ENCODE measurements at regions of chr4 and their contacts with region 1.

Region 1: GRCh38 chr4:122309988-122310626 is 68.7 kb upstream of the ADAD1 start:
- DNase-seq: no peak
- ATAC-seq: no peak
- H3K4me3 Mint-ChIP-seq: no peak overlapping the region
- H3K27ac Mint-ChIP-seq: no peak overlapping the region
- H3K4me1 Mint-ChIP-seq: no peaks in the 10 kb centered on the region
- H3K27me3 Mint-ChIP-seq: no peaks in the 10 kb centered on the region
- CTCF ChIP-seq: no peak

Region 2: DNA sequence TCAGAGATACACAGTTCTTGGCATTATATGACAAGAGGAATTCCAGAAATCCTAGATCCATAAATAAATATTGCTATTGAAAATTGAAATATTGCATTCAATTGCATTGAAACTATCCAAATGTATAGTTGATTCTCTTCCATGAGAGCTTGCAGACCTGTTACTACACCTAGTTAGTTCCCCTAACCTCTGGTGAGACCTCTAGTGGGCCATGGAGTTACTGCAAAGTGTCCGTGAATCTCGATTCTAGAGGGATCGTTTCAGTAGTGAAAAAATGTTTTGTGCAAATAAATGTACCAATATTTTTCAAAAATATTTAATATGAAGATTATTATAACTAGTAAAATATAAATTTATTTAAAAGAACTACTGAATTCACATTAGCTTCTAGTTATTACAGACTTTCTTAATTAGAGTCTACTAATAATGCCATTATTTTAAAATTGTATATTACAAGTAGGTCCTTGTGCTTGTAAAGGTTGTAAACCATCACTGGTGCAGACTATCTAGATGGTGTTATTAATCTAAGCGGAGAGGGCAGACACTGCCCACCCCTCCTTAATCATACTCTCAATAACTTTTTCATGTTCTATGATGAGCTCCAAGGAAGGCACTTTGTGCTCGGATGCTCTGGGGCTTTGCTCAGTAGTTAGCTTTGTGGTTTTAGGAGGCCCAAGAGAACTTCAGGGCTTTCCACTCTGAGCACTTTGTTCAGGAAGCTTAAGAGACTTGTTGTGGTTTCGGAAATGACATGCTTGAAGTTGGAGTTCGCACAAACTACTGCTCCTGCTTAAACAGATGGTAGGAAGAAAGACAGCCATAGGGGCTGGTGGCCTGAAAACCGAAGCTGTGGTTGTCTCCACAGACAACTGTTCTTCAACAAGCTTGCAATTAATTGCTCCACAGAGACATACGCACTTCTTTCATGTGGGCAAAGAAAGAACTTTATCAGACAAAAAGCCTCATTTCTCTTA is 268.0 kb after region 1 on chr4:
- CTCF ChIA-PET with region 1: no interaction called
- POLR2A ChIA-PET with region 1: no interaction called
- intact Hi-C with region 1: loop called (anchors 2 kb)
- DNase-seq: no peak
- ATAC-seq: peak; percentile 54
- H3K4me3 Mint-ChIP-seq: no peak overlapping the region
- H3K27ac Mint-ChIP-seq: no peak overlapping the region
- H3K4me1 Mint-ChIP-seq: no peaks in the 10 kb centered on the region
- H3K27me3 Mint-ChIP-seq: peaks cover 7% of the 10 kb centered on the region
- CTCF ChIP-seq: peak; percentile 68

Region 3: GRCh38 chr4:122716825-122717448 is 406.8 kb after region 1 on chr4:
- CTCF ChIA-PET with region 1: no interaction called
- POLR2A ChIA-PET with region 1: no interaction called
- intact Hi-C with region 1: loop called (anchors 10 kb)
- DNase-seq: no peak
- ATAC-seq: peak; percentile 82
- H3K4me3 Mint-ChIP-seq: no peak overlapping the region
- H3K27ac Mint-ChIP-seq: no peak overlapping the region
- H3K4me1 Mint-ChIP-seq: no peaks in the 10 kb centered on the region
- H3K27me3 Mint-ChIP-seq: peaks cover 7% of the 10 kb centered on the region
- CTCF ChIP-seq: no peak

Region 4: DNA sequence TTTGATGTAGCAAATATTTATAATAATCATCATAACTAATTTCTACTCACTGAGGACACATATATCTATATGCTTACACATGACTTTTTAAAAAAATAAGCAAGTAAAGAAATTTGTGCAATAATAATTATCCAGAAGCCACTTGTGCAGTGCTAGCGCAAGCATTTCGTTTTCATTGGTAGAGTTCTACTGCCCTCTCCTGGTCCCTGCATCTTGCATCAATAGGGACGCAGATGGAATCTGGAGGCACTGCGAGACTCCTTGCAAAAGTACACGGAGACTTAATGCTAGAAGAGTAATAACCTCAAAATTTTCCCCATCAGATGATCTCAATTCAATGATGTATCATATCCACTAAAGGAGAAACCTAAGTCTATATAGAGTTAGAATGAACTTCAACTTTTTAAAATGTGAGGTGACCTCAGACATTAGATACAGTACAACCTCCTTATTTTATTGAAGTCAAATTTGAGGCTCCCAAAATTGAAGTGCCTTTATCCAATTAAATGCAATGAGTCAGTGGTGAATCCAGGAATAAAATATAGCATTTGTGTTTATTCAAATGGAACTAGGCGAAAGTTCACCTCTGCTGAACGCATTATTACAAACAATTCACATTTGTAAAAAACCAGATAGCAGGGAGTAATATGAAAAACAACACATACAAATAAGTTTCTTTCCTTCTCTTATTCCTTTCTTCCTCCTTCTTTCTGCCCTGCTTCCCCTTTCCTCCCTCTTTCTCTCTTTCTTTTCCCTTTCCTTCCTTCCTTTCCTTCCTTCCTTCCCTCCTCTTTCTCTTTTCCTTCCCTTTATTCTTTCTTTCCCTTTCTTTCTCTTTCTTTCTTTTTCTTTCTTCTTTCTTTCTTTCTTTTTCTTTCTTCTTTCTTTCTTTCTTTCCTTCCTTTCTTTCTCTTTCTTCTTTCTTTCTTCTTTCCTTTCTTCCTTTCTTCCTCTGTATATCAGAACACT is 1952.4 kb after region 1 on chr4:
- CTCF ChIA-PET with region 1: no interaction called
- POLR2A ChIA-PET with region 1: no interaction called
- intact Hi-C with region 1: loop called (anchors 5 kb)
- DNase-seq: no peak
- ATAC-seq: peak; percentile 56
- H3K4me3 Mint-ChIP-seq: no peak overlapping the region
- H3K27ac Mint-ChIP-seq: no peak overlapping the region
- H3K4me1 Mint-ChIP-seq: no peaks in the 10 kb centered on the region
- H3K27me3 Mint-ChIP-seq: no peaks in the 10 kb centered on the region
- CTCF ChIP-seq: no peak

Measured in activated B cell treated with CpG ODN at 0.5 μM for 24 hours (primary cell).